CD14-positive monocyte (primary cell): ENCODE measurements at regions of chr6 and their contacts with region 1.

Region 1: GRCh38 chr6:155530219-155530834 is 74.7 kb upstream of the NOX3 start:
- DNase-seq: peak; percentile 5 to 23 (median 11)
- H3K4me3 ChIP-seq: no peak overlapping the region
- H3K4me3 Mint-ChIP-seq: no peak overlapping the region
- H3K27ac ChIP-seq: no peak overlapping the region
- H3K27ac Mint-ChIP-seq: peak overlapping the region; percentile 64 to 92 (median 85)
- H3K4me1 ChIP-seq: peaks cover 10 to 11% of the 10 kb centered on the region in 2 donors
- H3K4me1 Mint-ChIP-seq: peaks cover 20% of the 10 kb centered on the region
- H3K27me3 ChIP-seq: no peaks in the 10 kb centered on the region
- H3K27me3 Mint-ChIP-seq: no peaks in the 10 kb centered on the region
- CTCF ChIP-seq: peak; percentile 69

Region 2: DNA sequence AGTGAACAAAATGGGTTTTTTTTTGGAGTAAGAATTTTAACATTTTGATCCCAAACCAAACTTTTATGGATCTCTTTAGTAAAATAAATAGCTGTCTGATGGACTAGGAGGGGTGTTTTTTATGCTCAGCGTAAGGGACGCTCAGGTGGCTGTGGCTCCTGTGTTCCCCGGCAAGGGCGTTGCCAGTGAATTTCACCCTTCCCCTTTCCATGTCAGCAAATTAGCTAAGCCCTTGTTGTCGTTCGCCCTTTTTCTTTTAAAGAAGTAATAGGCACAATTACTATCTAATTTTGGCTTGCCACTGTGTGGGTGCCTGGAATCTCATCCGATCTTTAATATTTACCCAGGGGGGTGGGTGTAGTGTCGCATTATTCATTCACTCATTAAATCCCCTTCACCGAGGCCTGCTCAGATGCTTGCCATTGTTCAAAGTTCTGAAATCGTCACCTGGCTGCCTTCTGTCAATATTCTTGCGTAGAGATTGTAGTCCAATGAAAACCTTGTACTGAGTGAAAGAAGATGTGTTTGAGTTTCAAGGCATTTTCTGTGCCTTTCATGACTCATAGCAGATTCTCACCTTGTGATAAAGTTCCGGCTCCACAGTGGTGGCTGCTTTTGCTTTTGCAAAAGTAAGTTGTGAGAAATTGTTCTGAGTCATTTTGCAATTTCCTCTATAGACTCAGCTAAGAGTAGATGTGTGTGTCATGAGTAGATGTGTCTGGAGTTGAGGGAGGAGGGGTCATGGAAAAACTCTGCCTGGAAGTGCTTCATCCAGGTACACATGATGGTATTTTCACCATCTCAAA is 306.5 kb before region 1 on chr6:
- intact Hi-C with region 1: loop called in 1 of 2 experiments (anchors 5 kb)
- DNase-seq: peak; percentile 84 to 94 (median 92)
- H3K4me3 ChIP-seq: peak overlapping the region in 1 of 3 experiments; percentile 51
- H3K4me3 Mint-ChIP-seq: peak overlapping the region; percentile 1 to 62
- H3K27ac ChIP-seq: peak overlapping the region; percentile 72 to 88
- H3K27ac Mint-ChIP-seq: peak overlapping the region; percentile 89 to 99 (median 94)
- H3K4me1 ChIP-seq: peaks cover 53 to 56% of the 10 kb centered on the region in 2 donors
- H3K4me1 Mint-ChIP-seq: peaks cover 55% of the 10 kb centered on the region
- H3K27me3 ChIP-seq: no peaks in the 10 kb centered on the region
- H3K27me3 Mint-ChIP-seq: peaks cover 0 to 5% (median 2%) of the 10 kb centered on the region in 3 donors
- CTCF ChIP-seq: no peak

Region 3: DNA sequence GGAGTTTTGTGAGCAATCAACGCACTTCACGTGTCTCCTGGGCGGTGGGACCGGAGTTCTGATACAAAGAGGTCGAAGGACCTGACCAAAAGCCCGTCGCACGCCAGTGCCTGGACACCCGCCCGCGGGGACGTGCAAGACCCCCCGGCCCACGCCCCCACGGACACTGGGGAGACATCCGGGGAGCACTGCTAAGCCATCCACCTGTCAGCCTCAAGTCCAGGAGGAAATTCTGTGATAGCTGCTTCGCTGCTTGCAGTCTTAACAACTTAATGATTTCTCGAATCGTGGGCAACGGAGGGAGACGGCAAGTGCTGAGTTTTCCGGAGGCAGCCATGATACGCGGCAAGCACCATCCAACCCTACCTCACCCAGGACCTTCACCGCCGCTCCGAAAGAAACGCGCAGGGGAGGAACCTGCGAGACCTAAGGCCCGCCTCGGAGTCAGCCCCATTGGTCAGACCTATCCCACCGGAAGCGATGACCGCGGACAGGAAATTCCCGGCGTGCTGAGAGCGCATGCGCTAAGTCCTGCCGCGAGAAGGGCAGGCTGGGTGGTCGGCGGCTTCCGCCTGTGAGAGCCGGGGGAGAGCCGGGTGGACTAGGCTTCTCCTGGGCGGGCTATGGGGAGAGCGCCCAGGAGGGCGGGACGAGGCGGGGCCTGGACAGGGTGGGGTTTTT is 216.1 kb before region 1 on chr6 and contains the start of gene TFB1M:
- intact Hi-C with region 1: no loop called
- DNase-seq: peak; percentile 95 to 97 (median 96)
- H3K4me3 ChIP-seq: peak within 1 kb of the TSS; percentile 89 to 90 (median 89)
- H3K4me3 Mint-ChIP-seq: peak within 1 kb of the TSS; percentile 93 to 98
- H3K27ac ChIP-seq: peak within 1 kb of the TSS; percentile 97 to 99
- H3K27ac Mint-ChIP-seq: peak within 1 kb of the TSS; percentile 94 to 98 (median 96)
- H3K4me1 ChIP-seq: peaks cover 18 to 27% of the 10 kb centered on the region in 2 donors
- H3K4me1 Mint-ChIP-seq: peaks cover 19% of the 10 kb centered on the region
- H3K27me3 ChIP-seq: no peaks in the 10 kb centered on the region
- H3K27me3 Mint-ChIP-seq: no peaks in the 10 kb centered on the region
- CTCF ChIP-seq: no peak
- polyA plus RNA-seq, gene TFB1M: 4.8 to 5.4 (median 4.8) TPM

Region 4: GRCh38 chr6:155327326-155328073 is 202.8 kb before region 1 on chr6:
- intact Hi-C with region 1: loop called (anchors 2 to 10 kb)
- DNase-seq: peak; percentile 53 to 58 (median 58)
- H3K4me3 ChIP-seq: no peak overlapping the region
- H3K4me3 Mint-ChIP-seq: no peak overlapping the region
- H3K27ac ChIP-seq: no peak overlapping the region
- H3K27ac Mint-ChIP-seq: peak overlapping the region in 4 of 7 donors; percentile 0 to 33 (median 29)
- H3K4me1 ChIP-seq: no peaks in the 10 kb centered on the region
- H3K4me1 Mint-ChIP-seq: peaks cover 2% of the 10 kb centered on the region
- H3K27me3 ChIP-seq: no peaks in the 10 kb centered on the region
- H3K27me3 Mint-ChIP-seq: peaks cover 0 to 5% (median 0%) of the 10 kb centered on the region in 3 donors
- CTCF ChIP-seq: peak; percentile 86

Region 5: DNA sequence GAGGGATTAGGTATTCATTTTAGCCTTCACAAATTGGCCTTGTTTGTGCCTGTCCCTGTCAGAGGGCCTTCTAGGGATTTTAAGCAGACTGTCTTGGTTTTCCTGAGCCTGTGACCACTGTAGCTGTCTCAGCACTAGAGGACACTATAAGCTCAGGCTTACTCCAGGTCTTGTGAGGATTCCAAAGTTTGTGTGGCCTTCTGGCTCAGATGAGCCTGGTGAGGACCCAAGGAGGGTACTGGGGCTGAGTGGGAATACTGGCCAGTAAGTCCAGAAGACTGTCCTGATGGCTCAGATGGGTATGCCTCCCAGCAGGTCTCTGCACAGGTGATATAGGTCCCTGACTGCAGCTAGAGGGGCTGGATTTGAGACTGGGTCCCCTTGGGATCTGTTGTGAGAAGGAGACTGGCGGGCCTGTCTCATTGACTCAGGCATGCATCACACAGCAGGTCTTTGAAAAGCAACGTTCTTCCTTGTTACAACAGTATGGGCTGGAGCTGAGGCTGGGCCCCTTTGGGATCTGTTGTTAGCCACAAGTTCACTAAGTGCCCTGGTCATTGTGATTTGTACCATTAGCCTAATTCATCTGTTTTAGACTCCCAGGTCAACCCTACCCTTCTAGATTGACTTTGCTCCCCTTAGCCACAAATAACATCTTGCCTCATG is 189.7 kb before region 1 on chr6:
- intact Hi-C with region 1: loop called in 1 of 2 experiments (anchors 5 kb)
- DNase-seq: no peak
- H3K4me3 ChIP-seq: no peak overlapping the region
- H3K4me3 Mint-ChIP-seq: no peak overlapping the region
- H3K27ac ChIP-seq: no peak overlapping the region
- H3K27ac Mint-ChIP-seq: peak overlapping the region in 5 of 7 donors; percentile 2 to 86 (median 60)
- H3K4me1 ChIP-seq: no peaks in the 10 kb centered on the region
- H3K4me1 Mint-ChIP-seq: peaks cover 4% of the 10 kb centered on the region
- H3K27me3 ChIP-seq: no peaks in the 10 kb centered on the region
- H3K27me3 Mint-ChIP-seq: peaks cover 0 to 2% (median 0%) of the 10 kb centered on the region in 3 donors
- CTCF ChIP-seq: no peak

Region 6: GRCh38 chr6:155382338-155382685 is 148.0 kb before region 1 on chr6:
- intact Hi-C with region 1: no loop called
- DNase-seq: no peak
- H3K4me3 ChIP-seq: no peak overlapping the region
- H3K4me3 Mint-ChIP-seq: no peak overlapping the region
- H3K27ac ChIP-seq: no peak overlapping the region
- H3K27ac Mint-ChIP-seq: no peak overlapping the region
- H3K4me1 ChIP-seq: no peaks in the 10 kb centered on the region
- H3K4me1 Mint-ChIP-seq: no peaks in the 10 kb centered on the region
- H3K27me3 ChIP-seq: no peaks in the 10 kb centered on the region
- H3K27me3 Mint-ChIP-seq: peaks cover 0 to 3% (median 0%) of the 10 kb centered on the region in 3 donors
- CTCF ChIP-seq: no peak

Region 7: GRCh38 chr6:155638200-155638599 is 107.9 kb after region 1 on chr6:
- intact Hi-C with region 1: no loop called
- DNase-seq: no peak
- H3K4me3 ChIP-seq: no peak overlapping the region
- H3K4me3 Mint-ChIP-seq: no peak overlapping the region
- H3K27ac ChIP-seq: no peak overlapping the region
- H3K27ac Mint-ChIP-seq: no peak overlapping the region
- H3K4me1 ChIP-seq: no peaks in the 10 kb centered on the region
- H3K4me1 Mint-ChIP-seq: no peaks in the 10 kb centered on the region
- H3K27me3 ChIP-seq: no peaks in the 10 kb centered on the region
- H3K27me3 Mint-ChIP-seq: peaks cover 0 to 2% (median 0%) of the 10 kb centered on the region in 3 donors
- CTCF ChIP-seq: no peak